Activated CD4-positive, alpha-beta memory T cell treated with anti-CD3 and anti-CD28 coated beads for 36 hours (primary cell): ENCODE measurements at regions of chr18 and their contacts with region 1.

Region 1: GRCh38 chr18:12376718-12377555 is at the start of gene AFG3L2:
- DNase-seq: peak; percentile 100
- H3K4me3 Mint-ChIP-seq: peak within 1 kb of the TSS; percentile 89
- H3K27ac Mint-ChIP-seq: peak within 1 kb of the TSS; percentile 87
- H3K4me1 Mint-ChIP-seq: peaks cover 44% of the 10 kb centered on the region
- H3K27me3 Mint-ChIP-seq: no peaks in the 10 kb centered on the region
- total RNA-seq, gene AFG3L2: 45.2 to 48.8 TPM

Region 2: DNA sequence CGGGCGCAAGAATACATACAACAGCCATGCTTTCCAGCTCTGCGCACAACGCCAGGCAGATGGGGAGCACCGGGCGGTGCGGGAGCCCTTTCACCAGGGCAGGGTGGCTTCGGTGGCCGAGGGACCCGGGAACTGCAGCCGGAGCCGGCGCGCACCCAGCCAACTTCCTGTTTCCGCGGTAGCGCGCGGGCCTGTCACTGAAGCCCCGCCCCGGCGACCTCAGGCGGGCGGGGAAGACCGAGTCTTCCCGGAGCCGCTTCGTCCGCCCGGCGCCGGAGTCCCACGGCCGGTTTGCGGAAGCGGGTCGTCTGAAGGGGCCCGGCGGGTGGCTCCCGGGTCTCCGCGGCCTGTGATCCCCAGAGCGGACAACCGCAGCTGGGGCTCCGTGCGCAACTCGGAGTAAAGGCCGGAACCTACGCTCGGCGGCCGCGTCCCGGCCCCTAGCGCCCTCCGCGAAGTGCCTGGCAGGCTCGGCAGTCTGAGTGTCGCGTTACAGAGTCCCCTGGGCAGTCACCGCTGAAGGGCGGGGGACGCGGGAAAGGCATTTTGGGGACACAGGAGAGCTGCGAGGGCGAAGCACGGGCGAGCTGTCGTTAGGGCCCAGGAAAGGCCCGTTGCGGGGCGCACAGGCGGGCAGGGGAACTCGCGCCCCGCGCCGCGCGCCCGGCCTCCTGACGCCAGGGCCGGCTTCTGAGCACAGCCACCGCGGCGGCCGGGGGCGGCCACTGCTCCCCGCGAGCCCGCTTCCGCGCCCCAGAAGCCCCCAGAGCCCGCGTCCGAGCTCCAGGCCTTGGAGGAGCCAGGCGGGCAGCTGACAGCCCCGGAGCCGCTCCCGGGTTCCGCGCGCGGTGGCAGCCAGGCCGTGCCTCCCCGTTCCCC is 468.5 kb before region 1 on chr18 and contains the start of gene MPPE1:
- CTCF ChIA-PET with region 1: no interaction called
- POLR2A ChIA-PET with region 1: no interaction called
- intact Hi-C with region 1: loop called (anchors 1 kb)
- DNase-seq: peak; percentile 91
- H3K4me3 Mint-ChIP-seq: peak within 1 kb of the TSS; percentile 92
- H3K27ac Mint-ChIP-seq: peak within 1 kb of the TSS; percentile 90
- H3K4me1 Mint-ChIP-seq: peaks cover 22% of the 10 kb centered on the region
- H3K27me3 Mint-ChIP-seq: no peaks in the 10 kb centered on the region
- total RNA-seq, gene MPPE1: 34.0 to 35.4 TPM

Region 3: GRCh38 chr18:12362473-12363174 is 14.3 kb before region 1 on chr18:
- CTCF ChIA-PET with region 1: no interaction called
- POLR2A ChIA-PET with region 1: no interaction called
- intact Hi-C with region 1: no loop called
- DNase-seq: no peak
- H3K4me3 Mint-ChIP-seq: no peak overlapping the region
- H3K27ac Mint-ChIP-seq: no peak overlapping the region
- H3K4me1 Mint-ChIP-seq: peaks cover 3% of the 10 kb centered on the region
- H3K27me3 Mint-ChIP-seq: no peaks in the 10 kb centered on the region

Region 4: DNA sequence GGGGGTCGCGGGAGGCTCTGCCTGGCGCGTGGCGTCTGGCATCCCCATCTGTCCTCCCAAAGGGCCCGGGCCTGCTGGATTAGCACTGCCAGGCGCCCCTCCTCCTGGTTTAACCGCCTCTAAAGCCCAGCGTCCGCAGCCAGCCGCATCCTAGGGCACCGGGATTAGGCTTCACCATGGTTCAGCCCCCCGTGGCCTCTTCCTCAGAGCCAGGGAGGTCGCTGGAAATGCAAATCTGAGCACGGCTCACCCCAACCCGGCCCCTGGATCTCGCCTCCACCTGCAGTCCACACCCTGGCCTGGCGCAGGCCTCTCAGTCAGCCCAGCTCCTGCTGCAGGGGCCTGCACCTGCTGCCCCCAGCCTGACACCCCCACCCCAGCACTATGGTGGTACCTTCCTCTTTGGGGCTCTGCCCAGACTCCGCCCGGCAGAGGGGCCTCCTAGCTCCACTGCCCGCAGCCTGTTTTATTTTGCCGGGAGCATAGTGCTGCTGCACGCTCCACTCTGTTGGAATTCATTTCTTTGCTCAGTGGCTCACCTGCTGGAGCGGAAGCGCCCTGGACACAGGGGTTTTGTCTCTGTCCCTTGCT is 44.0 kb after region 1 on chr18:
- CTCF ChIA-PET with region 1: no interaction called
- POLR2A ChIA-PET with region 1: no interaction called
- intact Hi-C with region 1: loop called (anchors 5 kb)
- DNase-seq: no peak
- H3K4me3 Mint-ChIP-seq: peak overlapping the region; percentile 51
- H3K27ac Mint-ChIP-seq: no peak overlapping the region
- H3K4me1 Mint-ChIP-seq: peaks cover 7% of the 10 kb centered on the region
- H3K27me3 Mint-ChIP-seq: peaks cover 4% of the 10 kb centered on the region

Region 5: DNA sequence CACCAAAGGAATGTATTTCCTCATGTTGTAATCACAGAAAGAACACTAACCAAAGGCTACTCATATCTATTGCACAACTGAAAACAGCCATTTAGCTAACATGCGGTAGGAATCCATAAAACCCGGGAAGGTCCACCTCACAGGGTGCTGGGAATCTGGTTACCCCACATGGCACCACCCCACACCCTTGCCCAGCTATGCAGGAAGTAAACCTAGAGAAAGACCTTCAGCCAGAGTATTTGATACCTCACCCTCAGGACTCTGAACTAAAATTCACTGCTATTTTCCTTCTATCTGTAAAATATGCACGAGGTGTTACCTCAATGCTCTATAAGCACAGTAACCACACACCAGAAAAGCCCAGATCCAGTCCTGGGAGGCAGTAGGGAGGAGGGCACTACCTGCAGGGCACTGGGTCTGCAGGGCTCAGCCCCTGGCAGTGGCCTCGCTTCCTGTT is 461.3 kb after region 1 on chr18:
- CTCF ChIA-PET with region 1: no interaction called
- POLR2A ChIA-PET with region 1: no interaction called
- intact Hi-C with region 1: loop called (anchors 5 kb)
- DNase-seq: peak; percentile 34
- H3K4me3 Mint-ChIP-seq: peak overlapping the region; percentile 45
- H3K27ac Mint-ChIP-seq: peak overlapping the region; percentile 94
- H3K4me1 Mint-ChIP-seq: peaks cover 63% of the 10 kb centered on the region
- H3K27me3 Mint-ChIP-seq: no peaks in the 10 kb centered on the region

Region 6: GRCh38 chr18:12990967-12991838 is 614.3 kb after region 1 on chr18 and contains the start of gene CEP192:
- CTCF ChIA-PET with region 1: no interaction called
- POLR2A ChIA-PET with region 1: interaction called, 6 read pairs
- intact Hi-C with region 1: loop called (anchors 2 kb)
- DNase-seq: peak; percentile 99
- H3K4me3 Mint-ChIP-seq: peak within 1 kb of the TSS; percentile 96
- H3K27ac Mint-ChIP-seq: peak within 1 kb of the TSS; percentile 92
- H3K4me1 Mint-ChIP-seq: peaks cover 15% of the 10 kb centered on the region
- H3K27me3 Mint-ChIP-seq: peaks cover 3% of the 10 kb centered on the region
- total RNA-seq, gene CEP192: 31.0 to 34.0 TPM